ENCODE measurements at regions of chr12 and their contacts with region 1.

Region 1: GRCh38 chr12:117331703-117332102 is 29.7 kb downstream of the NOS1 start:
- DNase-seq: peak; percentile 77
- ATAC-seq: peak; percentile 52
- H3K4me3 ChIP-seq: no peak overlapping the region
- H3K27ac ChIP-seq: no peak overlapping the region
- H3K4me1 ChIP-seq: peaks cover 10% of the 10 kb centered on the region; the same call in 1 of the 2 replicates
- H3K27me3 ChIP-seq: peaks cover 49% of the 10 kb centered on the region
- CTCF ChIP-seq: peak; percentile 47

Region 2: DNA sequence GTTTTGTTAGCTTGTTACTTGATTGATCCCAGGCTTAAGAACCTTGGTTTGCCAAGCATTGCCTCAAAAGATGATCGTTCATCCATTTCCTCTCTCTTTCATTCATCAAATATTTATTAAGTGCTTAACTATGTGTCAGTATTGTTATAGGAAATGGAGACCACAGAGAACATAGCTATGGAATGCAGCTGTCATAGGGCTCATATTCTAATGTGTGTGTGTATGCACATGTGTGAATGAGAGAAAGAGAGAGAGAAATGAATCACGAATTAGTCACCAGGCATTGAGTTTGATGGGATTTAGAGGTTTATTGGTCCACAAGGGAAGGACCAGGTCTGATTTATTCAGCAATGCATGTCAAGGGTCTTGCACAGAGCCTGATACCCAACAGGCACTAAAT is 70.5 kb before region 1 on chr12:
- CTCF ChIA-PET with region 1: no interaction called
- POLR2A ChIA-PET with region 1: interaction called, 15 read pairs
- intact Hi-C with region 1: no loop called
- DNase-seq: peak; percentile 96
- ATAC-seq: peak; percentile 98
- H3K4me3 ChIP-seq: no peak overlapping the region
- H3K27ac ChIP-seq: peak overlapping the region; percentile 50
- H3K4me1 ChIP-seq: no peaks in the 10 kb centered on the region
- H3K27me3 ChIP-seq: no peaks in the 10 kb centered on the region
- CTCF ChIP-seq: no peak

Region 3: DNA sequence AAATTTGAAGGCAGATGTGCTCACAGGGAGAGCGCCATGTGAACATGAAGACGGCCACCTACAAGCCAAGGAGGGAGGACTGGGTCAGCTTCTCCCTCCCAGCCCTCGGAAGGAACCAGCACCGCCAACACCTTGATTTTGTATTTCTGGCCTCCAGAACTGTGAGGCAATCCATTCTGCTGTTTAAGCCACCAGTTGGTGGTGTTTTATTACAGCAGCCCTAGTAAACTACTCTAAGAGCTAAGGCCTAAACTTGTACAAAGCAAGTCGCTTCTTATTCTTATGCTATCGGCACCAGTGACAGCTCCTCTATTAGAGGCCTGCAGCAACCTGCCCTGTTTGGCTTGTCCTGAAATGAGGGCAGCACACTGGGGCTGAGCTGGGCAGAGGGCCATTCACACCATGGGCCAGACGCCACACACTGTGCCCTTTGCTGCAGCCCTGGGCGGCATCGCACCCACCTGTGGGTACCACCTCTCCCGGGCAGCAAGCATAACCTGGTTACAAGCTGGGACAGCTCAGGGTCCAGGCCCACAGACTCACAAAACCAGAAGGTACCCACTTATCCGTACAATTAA is 33.0 kb before region 1 on chr12:
- CTCF ChIA-PET with region 1: no interaction called
- POLR2A ChIA-PET with region 1: no interaction called
- intact Hi-C with region 1: no loop called
- DNase-seq: no peak
- ATAC-seq: no peak
- H3K4me3 ChIP-seq: no peak overlapping the region
- H3K27ac ChIP-seq: no peak overlapping the region
- H3K4me1 ChIP-seq: peaks cover 6% of the 10 kb centered on the region; the same call in 1 of the 2 replicates
- H3K27me3 ChIP-seq: peaks cover 5% of the 10 kb centered on the region
- CTCF ChIP-seq: no peak

Region 4: GRCh38 chr12:117441751-117442150 is 110.0 kb after region 1 on chr12:
- CTCF ChIA-PET with region 1: no interaction called
- POLR2A ChIA-PET with region 1: no interaction called
- intact Hi-C with region 1: no loop called
- DNase-seq: peak; percentile 76
- ATAC-seq: peak; percentile 75
- H3K4me3 ChIP-seq: no peak overlapping the region
- H3K27ac ChIP-seq: no peak overlapping the region
- H3K4me1 ChIP-seq: 0 out of 2 replicates have a peak, but pooled peaks cover 4% of the 10 kb centered on the region
- H3K27me3 ChIP-seq: no peaks in the 10 kb centered on the region
- CTCF ChIP-seq: no peak

Region 5: DNA sequence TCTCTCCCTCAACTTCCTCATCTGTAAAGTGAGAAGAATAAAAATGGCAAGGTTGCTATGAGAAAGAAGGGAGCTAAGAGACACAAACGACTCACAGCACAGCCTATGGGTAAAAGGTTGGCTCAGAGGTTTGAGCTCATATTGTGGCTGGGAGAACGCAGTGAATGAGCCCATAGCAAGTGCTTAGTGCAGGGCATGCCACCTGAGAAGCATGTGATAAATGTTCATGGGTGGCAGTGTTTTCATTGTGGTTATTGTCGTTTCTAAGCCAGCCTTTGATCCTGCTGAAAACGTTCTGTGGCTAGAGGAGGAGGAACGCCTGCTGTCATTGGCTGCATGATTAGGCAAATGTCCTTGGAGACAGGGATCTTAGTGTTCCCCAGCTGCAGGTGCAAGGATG is 486.7 kb after region 1 on chr12:
- CTCF ChIA-PET with region 1: no interaction called
- POLR2A ChIA-PET with region 1: no interaction called
- intact Hi-C with region 1: no loop called
- DNase-seq: peak; percentile 10
- ATAC-seq: peak; percentile 41; the same call in 1 of the 2 replicates
- H3K4me3 ChIP-seq: no peak overlapping the region
- H3K27ac ChIP-seq: no peak overlapping the region
- H3K4me1 ChIP-seq: peaks cover 6% of the 10 kb centered on the region; the same call in 1 of the 2 replicates
- H3K27me3 ChIP-seq: no peaks in the 10 kb centered on the region
- CTCF ChIP-seq: no peak